ENCODE measurements at regions of chr7 and their contacts with region 1.

Region 1: DNA sequence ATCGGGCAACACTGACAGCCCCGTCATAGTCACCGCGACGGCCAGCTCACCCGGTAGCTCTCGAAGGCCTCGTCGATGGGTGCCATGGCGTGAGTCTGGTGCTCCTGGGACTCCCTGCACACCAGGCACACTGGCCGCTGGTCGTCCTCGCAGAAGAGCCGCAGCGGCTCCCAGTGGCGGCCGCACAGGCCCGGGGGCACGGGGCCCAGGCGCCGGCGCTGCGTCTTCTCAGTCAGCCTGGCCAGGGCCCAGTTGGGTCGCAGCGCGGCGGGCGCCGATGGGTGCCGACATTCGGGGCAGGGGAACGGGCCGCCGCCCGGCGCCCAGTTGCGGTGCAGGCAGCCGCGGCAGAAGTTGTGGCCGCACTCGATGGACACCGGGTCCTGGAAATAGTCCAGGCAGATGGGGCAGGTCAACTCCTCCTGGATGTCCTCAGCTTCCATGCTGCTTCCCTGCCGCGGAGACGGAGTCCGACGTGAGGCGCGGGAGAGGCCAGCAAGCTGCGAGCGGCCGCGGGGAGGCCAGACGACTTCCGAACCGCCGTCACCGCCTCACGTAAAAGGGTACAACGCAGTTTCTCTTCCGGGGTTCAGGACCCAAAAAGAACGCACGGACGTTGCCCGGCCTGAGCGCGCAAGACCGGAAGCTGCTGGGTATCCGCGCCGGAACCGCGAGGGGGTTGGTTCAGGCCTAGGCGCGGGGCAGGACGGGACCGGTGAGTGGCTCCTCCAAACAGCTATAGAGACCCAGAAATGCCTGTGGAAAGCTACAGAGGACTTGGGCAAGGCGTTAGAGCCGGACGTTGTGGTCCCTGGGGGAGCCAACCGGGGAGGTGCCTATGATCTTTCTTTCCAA is at the start of gene TRIM4:
- DNase-seq: peak; percentile 85 to 90
- H3K4me3 ChIP-seq: peak within 1 kb of the TSS; percentile 80 to 98 (median 95)
- H3K27ac ChIP-seq: peak within 1 kb of the TSS; percentile 94
- H3K4me1 ChIP-seq: peaks cover 6 to 28% of the 10 kb centered on the region in 2 donors
- H3K27me3 ChIP-seq: no peaks in the 10 kb centered on the region
- CTCF ChIP-seq: peak in 1 of 3 donors; percentile 19
- POLR2A ChIP-seq: peak; percentile 51
- total RNA-seq, gene TRIM4: 46.1 to 65.9 (median 57.7) TPM

Region 2: GRCh38 chr7:99997545-99998137 is 78.5 kb after region 1 on chr7:
- intact Hi-C with region 1: loop called (anchors 10 kb)
- DNase-seq: peak in 1 of 2 donors; percentile 51
- H3K4me3 ChIP-seq: peak overlapping the region; percentile 52 to 69 (median 55)
- H3K27ac ChIP-seq: peak overlapping the region; percentile 78 to 81
- H3K4me1 ChIP-seq: no peaks in the 10 kb centered on the region
- H3K27me3 ChIP-seq: no peaks in the 10 kb centered on the region
- CTCF ChIP-seq: peak in 2 of 3 donors; percentile 15 to 40
- POLR2A ChIP-seq: no peak